CD4-positive, alpha-beta T cell (primary cell): ENCODE measurements at regions of chr10 and their contacts with region 1.

Region 1: DNA sequence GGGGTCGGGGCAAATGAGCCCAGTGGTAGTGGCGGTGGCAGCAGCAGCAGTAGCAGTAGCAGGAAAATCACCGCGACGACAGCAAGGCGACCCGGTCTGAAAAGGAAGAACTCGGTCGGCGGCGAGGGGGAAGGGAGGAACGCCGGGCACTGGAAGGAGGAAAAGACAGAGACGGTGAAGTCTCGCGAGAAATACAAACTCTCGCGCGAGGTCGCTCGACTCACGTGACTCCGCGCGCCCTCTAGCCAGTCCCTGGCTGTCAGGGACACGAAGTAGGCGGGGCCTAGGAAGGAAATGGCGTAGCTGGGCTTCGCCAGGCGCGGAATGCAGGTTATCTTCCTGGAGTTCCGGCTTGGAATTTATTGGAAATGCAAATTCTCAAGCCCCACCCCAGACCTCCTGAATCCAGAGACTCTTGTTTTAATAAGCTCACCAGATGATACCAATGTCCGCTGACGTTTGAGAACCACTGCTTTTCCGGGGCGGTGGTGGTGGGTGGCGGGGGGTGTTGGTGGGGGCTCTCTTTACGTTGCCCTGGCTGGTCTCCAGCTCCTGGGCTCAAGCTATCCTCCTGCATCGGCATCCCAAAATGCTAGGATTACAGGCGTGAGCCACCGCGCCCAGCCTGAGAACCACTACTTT is at the start of gene SMNDC1:
- DNase-seq: peak; percentile 94 to 99 (median 96)
- ATAC-seq: peak; percentile 88
- H3K4me3 ChIP-seq: peak within 1 kb of the TSS; percentile 72
- H3K4me3 Mint-ChIP-seq: peak within 1 kb of the TSS; percentile 97
- H3K27ac ChIP-seq: peak within 1 kb of the TSS; percentile 74 to 90
- H3K27ac Mint-ChIP-seq: peak within 1 kb of the TSS; percentile 98
- H3K4me1 ChIP-seq: peaks cover 23% of the 10 kb centered on the region
- H3K4me1 Mint-ChIP-seq: peaks cover 61% of the 10 kb centered on the region
- H3K27me3 ChIP-seq: no peaks in the 10 kb centered on the region
- H3K27me3 Mint-ChIP-seq: no peaks in the 10 kb centered on the region
- CTCF ChIP-seq: no peak
- total RNA-seq, gene SMNDC1: 40.2 to 48.1 TPM

Region 2: GRCh38 chr10:110354322-110354766 is 49.4 kb after region 1 on chr10:
- CTCF ChIA-PET with region 1: interaction called, 3 read pairs
- POLR2A ChIA-PET with region 1: interaction called, 11 read pairs
- intact Hi-C with region 1: loop called in 1 of 2 experiments (anchors 1 kb)
- DNase-seq: peak; percentile 64 to 86 (median 76)
- ATAC-seq: peak; percentile 28
- H3K4me3 ChIP-seq: no peak overlapping the region
- H3K4me3 Mint-ChIP-seq: peak overlapping the region; percentile 40
- H3K27ac ChIP-seq: no peak overlapping the region
- H3K27ac Mint-ChIP-seq: peak overlapping the region; percentile 96
- H3K4me1 ChIP-seq: peaks cover 60% of the 10 kb centered on the region
- H3K4me1 Mint-ChIP-seq: peaks cover 53% of the 10 kb centered on the region
- H3K27me3 ChIP-seq: no peaks in the 10 kb centered on the region
- H3K27me3 Mint-ChIP-seq: no peaks in the 10 kb centered on the region
- CTCF ChIP-seq: peak; percentile 67

Region 3: DNA sequence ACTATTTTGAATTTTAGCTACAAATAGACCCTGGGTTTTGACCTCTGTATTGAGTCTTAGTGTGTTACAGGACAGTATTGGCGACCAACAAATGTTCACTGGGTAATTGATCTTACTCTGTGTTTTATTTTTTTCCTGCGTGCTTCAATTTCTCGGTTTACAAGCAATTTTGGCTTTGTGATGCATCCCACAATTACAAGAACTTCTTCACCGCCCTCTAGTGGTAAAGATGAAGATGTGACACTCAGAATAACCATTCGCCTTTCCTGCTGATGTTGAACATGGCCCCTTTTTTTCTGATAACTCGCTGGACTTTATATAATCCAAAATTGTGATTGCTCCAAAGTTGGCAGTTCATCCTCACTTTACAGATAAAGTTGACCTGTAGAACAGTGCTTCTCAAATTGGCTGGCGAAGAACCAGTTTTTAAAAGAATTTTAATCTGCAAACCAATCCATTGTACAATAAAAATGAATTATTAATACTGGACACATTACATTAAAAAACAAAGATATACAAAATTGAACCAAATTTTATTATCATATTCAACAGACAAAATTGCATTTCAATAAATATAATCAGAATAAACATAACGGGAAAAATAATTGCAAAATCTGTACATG is 242.3 kb after region 1 on chr10:
- CTCF ChIA-PET with region 1: interaction called, 21 read pairs
- POLR2A ChIA-PET with region 1: interaction called, 11 read pairs
- intact Hi-C with region 1: loop called (anchors 1 kb)
- DNase-seq: peak in 3 of 14 experiments; percentile 77 to 79 (median 78)
- ATAC-seq: peak; percentile 80
- H3K4me3 ChIP-seq: no peak overlapping the region
- H3K4me3 Mint-ChIP-seq: no peak overlapping the region
- H3K27ac ChIP-seq: no peak overlapping the region
- H3K27ac Mint-ChIP-seq: no peak overlapping the region
- H3K4me1 ChIP-seq: no peaks in the 10 kb centered on the region
- H3K4me1 Mint-ChIP-seq: peaks cover 6% of the 10 kb centered on the region
- H3K27me3 ChIP-seq: peaks cover 0 to 10% of the 10 kb centered on the region in 2 experiments
- H3K27me3 Mint-ChIP-seq: peaks cover 21% of the 10 kb centered on the region
- CTCF ChIP-seq: peak; percentile 92

Region 4: DNA sequence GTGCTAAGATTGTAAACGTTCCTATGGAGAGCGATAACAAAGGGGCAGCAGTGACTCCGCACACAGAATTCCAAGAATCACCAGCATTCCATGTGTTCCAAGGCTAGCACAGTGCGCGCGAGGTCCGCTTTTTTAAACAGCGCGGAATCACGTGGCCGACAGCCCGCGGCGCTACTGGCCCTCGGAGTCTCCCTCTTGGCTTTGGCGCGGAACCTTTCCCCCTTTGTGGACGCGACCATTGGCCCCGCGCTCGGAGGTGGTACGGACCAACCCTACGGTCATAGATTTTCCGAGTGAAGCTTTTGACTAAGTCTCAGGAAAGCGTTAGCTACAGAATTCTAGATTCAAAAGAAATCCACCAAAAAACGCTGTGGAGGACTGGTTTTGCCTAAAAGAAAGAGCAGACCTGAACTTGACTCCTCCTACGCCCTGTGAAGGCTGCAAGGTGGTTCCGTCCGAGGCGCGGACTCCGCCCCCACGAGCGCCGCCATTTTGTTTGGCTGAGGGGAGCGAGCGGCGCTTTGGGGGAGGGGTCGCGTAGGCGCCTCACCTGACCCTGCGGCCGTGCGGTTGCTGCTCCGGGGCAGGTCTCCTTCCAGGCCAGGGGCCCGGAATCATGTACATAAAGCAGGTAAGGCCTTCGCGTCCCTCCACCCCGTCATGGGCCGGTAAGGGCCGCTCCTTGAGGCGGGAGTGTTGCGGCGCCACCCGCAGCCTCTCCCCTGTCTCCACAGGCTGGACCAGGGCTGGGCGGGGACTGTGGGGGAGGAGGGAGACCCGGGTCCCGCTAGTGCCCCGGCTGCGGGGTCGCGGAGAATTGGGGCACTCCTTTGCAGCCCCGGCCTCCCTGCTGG is 262.5 kb after region 1 on chr10 and contains the start of gene SMC3:
- CTCF ChIA-PET with region 1: interaction called, 5 read pairs
- POLR2A ChIA-PET with region 1: interaction called, 20 read pairs
- intact Hi-C with region 1: no loop called
- DNase-seq: peak; percentile 82 to 96 (median 88)
- ATAC-seq: peak; percentile 86
- H3K4me3 ChIP-seq: peak within 1 kb of the TSS; percentile 96
- H3K4me3 Mint-ChIP-seq: peak within 1 kb of the TSS; percentile 98
- H3K27ac ChIP-seq: peak within 1 kb of the TSS; percentile 79 to 83
- H3K27ac Mint-ChIP-seq: peak within 1 kb of the TSS; percentile 97
- H3K4me1 ChIP-seq: peaks cover 24% of the 10 kb centered on the region
- H3K4me1 Mint-ChIP-seq: peaks cover 49% of the 10 kb centered on the region
- H3K27me3 ChIP-seq: no peaks in the 10 kb centered on the region
- H3K27me3 Mint-ChIP-seq: peaks cover 21% of the 10 kb centered on the region
- CTCF ChIP-seq: no peak
- total RNA-seq, gene SMC3: 46.8 to 48.0 TPM

Region 5: GRCh38 chr10:110600487-110601101 is 295.7 kb after region 1 on chr10:
- CTCF ChIA-PET with region 1: interaction called, 21 read pairs
- POLR2A ChIA-PET with region 1: no interaction called
- intact Hi-C with region 1: loop called (anchors 2 kb)
- DNase-seq: peak in 4 of 14 experiments; percentile 41 to 74 (median 64)
- ATAC-seq: peak; percentile 54
- H3K4me3 ChIP-seq: no peak overlapping the region
- H3K4me3 Mint-ChIP-seq: no peak overlapping the region
- H3K27ac ChIP-seq: no peak overlapping the region
- H3K27ac Mint-ChIP-seq: no peak overlapping the region
- H3K4me1 ChIP-seq: no peaks in the 10 kb centered on the region
- H3K4me1 Mint-ChIP-seq: no peaks in the 10 kb centered on the region
- H3K27me3 ChIP-seq: no peaks in the 10 kb centered on the region
- H3K27me3 Mint-ChIP-seq: no peaks in the 10 kb centered on the region
- CTCF ChIP-seq: peak; percentile 46

Region 6: DNA sequence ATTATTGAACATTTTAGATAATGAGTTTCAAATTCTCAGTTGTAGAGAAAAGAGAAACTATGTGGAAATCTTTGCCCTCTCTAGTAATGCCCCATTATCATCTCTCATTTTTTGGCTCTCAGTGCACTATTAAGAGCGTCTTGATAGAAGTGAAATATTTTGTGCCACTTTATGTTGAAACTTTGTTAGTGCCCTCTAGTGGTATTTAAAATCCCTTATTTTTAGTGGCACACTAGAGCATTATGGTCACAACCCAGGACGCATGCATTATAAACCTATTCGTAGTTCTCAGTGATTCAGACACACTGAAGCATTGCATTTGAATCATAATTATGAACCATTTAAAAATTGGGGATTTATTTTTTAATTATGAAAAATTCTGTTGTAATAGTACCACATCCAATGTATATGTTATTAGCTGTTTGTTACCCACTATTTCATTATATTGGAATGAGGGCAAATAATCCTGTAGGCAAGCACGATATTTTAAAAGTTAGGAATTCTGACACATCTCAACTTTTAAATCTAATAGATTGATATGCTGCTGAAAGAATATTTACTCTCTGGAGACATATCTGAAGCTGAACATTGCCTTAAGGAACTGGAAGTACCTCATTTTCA is 588.8 kb after region 1 on chr10:
- CTCF ChIA-PET with region 1: no interaction called
- POLR2A ChIA-PET with region 1: no interaction called
- intact Hi-C with region 1: loop called in 1 of 2 experiments (anchors 10 kb)
- DNase-seq: peak in 4 of 14 experiments; percentile 10 to 77 (median 74)
- ATAC-seq: peak; percentile 74
- H3K4me3 ChIP-seq: no peak overlapping the region
- H3K4me3 Mint-ChIP-seq: peak overlapping the region; percentile 6
- H3K27ac ChIP-seq: no peak overlapping the region
- H3K27ac Mint-ChIP-seq: peak overlapping the region; percentile 51
- H3K4me1 ChIP-seq: no peaks in the 10 kb centered on the region
- H3K4me1 Mint-ChIP-seq: peaks cover 61% of the 10 kb centered on the region
- H3K27me3 ChIP-seq: no peaks in the 10 kb centered on the region
- H3K27me3 Mint-ChIP-seq: no peaks in the 10 kb centered on the region
- CTCF ChIP-seq: peak; percentile 79